ENCODE measurements at regions of chr13 and their contacts with region 1.

Region 1: GRCh38 chr13:20940083-20940880 is 37.7 kb upstream of the XPO4 start:
- DNase-seq: peak; percentile 83
- ATAC-seq: peak; percentile 18
- H3K4me3 ChIP-seq: no peak overlapping the region
- H3K27ac ChIP-seq: no peak overlapping the region; the same call in 1 of the 2 replicates
- H3K4me1 ChIP-seq: peaks cover 13% of the 10 kb centered on the region
- H3K27me3 ChIP-seq: peaks cover 4% of the 10 kb centered on the region; the same call in 1 of the 2 replicates
- CTCF ChIP-seq: no peak
- POLR2A ChIP-seq: no peak
- RAD21 ChIP-seq: no peak

Region 2: GRCh38 chr13:20400774-20401173 is 539.5 kb before region 1 on chr13:
- CTCF ChIA-PET with region 1: no interaction called
- POLR2A ChIA-PET with region 1: no interaction called
- dilution Hi-C with region 1: no loop called
- in situ Hi-C with region 1: no loop called
- intact Hi-C with region 1: no loop called
- DNase-seq: peak; percentile 63
- ATAC-seq: peak; percentile 44; the same call in 1 of the 2 replicates
- H3K4me3 ChIP-seq: no peak overlapping the region
- H3K27ac ChIP-seq: no peak overlapping the region
- H3K4me1 ChIP-seq: peaks cover 3% of the 10 kb centered on the region; the same call in 1 of the 2 replicates
- H3K27me3 ChIP-seq: peaks cover 7% of the 10 kb centered on the region; the same call in 1 of the 2 replicates
- CTCF ChIP-seq: no peak
- POLR2A ChIP-seq: no peak
- RAD21 ChIP-seq: no peak

Region 3: GRCh38 chr13:21043898-21044297 is 103.6 kb after region 1 on chr13:
- CTCF ChIA-PET with region 1: no interaction called
- POLR2A ChIA-PET with region 1: no interaction called
- dilution Hi-C with region 1: no loop called
- in situ Hi-C with region 1: no loop called
- intact Hi-C with region 1: loop called (anchors 1 kb)
- DNase-seq: peak; percentile 96
- ATAC-seq: peak; percentile 91
- H3K4me3 ChIP-seq: no peak overlapping the region
- H3K27ac ChIP-seq: peak overlapping the region; percentile 12; the same call in 1 of the 2 replicates
- H3K4me1 ChIP-seq: peaks cover 38% of the 10 kb centered on the region
- H3K27me3 ChIP-seq: no peaks in the 10 kb centered on the region
- CTCF ChIP-seq: no peak
- POLR2A ChIP-seq: no peak
- RAD21 ChIP-seq: no peak; the same call in 1 of the 2 replicates

Region 4: DNA sequence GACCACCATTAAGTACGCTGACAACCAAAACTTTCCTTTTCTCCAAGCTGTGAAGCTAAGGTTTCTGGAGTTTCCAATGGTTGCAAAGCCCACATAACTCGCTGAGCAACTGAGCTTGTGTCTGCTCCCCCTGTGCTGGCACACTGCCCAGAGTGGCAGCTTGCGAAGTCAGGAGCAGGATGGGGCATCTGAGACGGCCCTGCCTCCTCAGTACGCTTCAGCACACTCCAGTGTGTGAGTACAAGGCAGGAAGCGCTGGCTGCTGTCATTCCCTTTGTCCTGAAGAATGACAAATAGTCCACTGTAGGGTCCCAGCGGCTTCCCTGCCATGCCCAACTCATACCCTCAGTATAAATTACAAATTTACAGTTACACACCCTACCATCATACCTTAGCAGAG is 184.6 kb after region 1 on chr13:
- CTCF ChIA-PET with region 1: no interaction called
- POLR2A ChIA-PET with region 1: no interaction called
- dilution Hi-C with region 1: no loop called
- in situ Hi-C with region 1: loop called (anchors 5 kb)
- intact Hi-C with region 1: no loop called
- DNase-seq: peak; percentile 63
- ATAC-seq: peak; percentile 59
- H3K4me3 ChIP-seq: no peak overlapping the region
- H3K27ac ChIP-seq: no peak overlapping the region
- H3K4me1 ChIP-seq: peaks cover 3% of the 10 kb centered on the region; the same call in 1 of the 2 replicates
- H3K27me3 ChIP-seq: no peaks in the 10 kb centered on the region
- CTCF ChIP-seq: no peak
- POLR2A ChIP-seq: no peak
- RAD21 ChIP-seq: no peak

Region 5: DNA sequence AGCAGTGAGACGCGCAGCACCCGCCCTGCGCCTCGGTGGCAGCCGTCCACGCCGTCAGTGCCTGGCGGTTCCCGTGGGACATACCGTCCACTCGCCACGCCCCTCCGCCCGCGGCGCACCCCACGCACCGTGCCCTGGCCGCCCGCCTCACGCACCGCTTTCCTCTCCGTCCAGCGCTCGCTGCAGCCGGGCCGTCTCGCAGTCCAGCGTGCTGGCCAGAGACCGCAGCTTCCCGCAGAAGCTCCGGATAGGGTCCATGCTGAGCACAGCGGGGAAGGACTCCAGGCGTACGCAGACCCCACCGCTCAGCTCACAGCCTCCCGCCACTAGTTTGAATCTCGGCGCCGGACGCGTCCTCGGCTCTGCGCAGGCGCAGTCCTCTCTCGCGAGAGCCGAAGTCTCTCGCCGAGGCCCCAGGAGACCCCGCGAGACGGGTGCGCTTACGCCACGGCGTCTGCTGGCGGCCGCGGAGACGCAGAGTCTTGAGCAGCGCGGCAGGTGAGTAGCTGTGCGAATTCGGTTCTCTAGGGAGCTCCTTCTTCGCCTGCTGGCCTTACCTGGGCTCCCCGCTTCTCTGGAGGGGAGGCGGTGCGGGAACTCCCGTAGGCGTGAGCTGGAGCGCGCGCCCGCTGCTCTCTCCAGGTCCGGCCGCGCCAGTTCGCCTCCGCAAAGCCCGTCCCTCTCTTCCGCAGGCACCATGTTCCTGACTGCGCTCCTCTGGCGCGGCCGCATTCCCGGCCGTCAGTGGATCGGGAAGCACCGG is 236.1 kb after region 1 on chr13 and contains the starts of genes MRPL57 and SKA3:
- CTCF ChIA-PET with region 1: interaction called, 5 read pairs
- POLR2A ChIA-PET with region 1: no interaction called
- dilution Hi-C with region 1: no loop called
- in situ Hi-C with region 1: no loop called
- intact Hi-C with region 1: loop called (anchors 2 kb)
- DNase-seq: peak; percentile 91
- ATAC-seq: peak; percentile 91
- H3K4me3 ChIP-seq: peak within 1 kb of the TSS; percentile 87
- H3K27ac ChIP-seq: peak within 1 kb of the TSS; percentile 87
- H3K4me1 ChIP-seq: 0 out of 2 replicates have a peak, but pooled peaks cover 2% of the 10 kb centered on the region
- H3K27me3 ChIP-seq: no peaks in the 10 kb centered on the region
- CTCF ChIP-seq: no peak
- POLR2A ChIP-seq: peak; percentile 85
- RAD21 ChIP-seq: 0 out of 2 replicates have a peak, but pooled peaks have one; percentile 18
- total RNA-seq, gene MRPL57: 5.3 and 7.0 TPM in 2 replicates
- total RNA-seq, gene SKA3: 15.6 and 24.4 TPM in 2 replicates